GM13977 (cell line): ENCODE measurements at regions of chr2 and their contacts with region 1.

Region 1: DNA sequence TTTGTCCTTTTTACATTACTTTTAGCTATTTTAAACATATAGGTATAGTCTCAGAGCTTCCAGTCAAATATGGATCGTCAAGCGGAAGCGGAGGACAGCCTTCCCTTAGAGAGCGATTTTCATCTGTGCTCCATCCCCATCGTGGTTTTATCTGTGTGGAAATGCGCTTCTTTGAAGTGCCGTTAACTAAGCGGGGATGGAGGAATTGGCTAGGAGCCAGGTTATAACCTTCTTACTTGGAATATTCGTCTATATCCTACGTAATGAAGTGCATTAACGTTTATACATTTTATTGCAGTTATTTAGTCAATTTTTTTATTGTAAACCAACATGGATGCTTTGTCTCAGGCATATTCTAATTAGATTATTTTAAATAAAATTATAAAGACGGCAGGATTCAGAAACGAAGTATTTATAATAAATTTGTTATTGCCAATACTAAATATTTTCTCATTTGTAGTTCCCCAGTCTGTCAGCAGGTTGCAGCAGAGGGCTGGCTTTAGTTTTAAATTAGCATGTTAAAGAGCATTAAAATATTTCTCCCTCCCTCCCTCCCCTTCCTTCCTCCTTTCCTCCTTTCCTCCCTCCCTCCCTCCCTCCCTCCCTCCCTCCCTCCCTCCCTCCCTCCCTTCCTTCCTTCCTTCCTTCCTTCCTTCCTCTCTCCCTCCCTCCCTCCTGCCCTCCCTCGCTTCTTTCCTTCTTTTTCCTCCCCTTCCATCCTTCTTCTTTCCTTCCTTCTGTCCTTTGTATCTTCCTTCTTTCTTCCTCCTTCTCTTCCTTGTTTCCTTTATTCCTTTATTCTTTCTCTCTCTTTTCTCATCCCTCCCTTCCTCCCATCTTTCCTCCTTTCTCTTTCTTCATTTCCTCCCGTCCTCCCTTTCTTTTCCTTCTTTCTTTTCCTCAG is 80.6 kb upstream of the DOCK10 start:
- DNase-seq: peak; percentile 13
- CTCF ChIP-seq: peak; percentile 70

Region 2: GRCh38 chr2:225660262-225661131 is 537.7 kb after region 1 on chr2:
- in situ Hi-C with region 1: loop called (anchors 25 kb)
- DNase-seq: peak; percentile 51
- CTCF ChIP-seq: peak; percentile 88

Region 3: GRCh38 chr2:225693259-225693658 is 570.4 kb after region 1 on chr2:
- in situ Hi-C with region 1: no loop called
- DNase-seq: no peak
- CTCF ChIP-seq: no peak